GM10248 (cell line): ENCODE measurements at regions of chr17 and their contacts with region 1.

Region 1: GRCh38 chr17:69388822-69389442 is 25.6 kb upstream of the MAP2K6 start:
- DNase-seq: no peak
- CTCF ChIP-seq: no peak

Region 2: GRCh38 chr17:69223809-69224208 is 165.1 kb before region 1 on chr17:
- CTCF ChIA-PET with region 1: no interaction called
- POLR2A ChIA-PET with region 1: no interaction called
- DNase-seq: peak; percentile 17
- CTCF ChIP-seq: no peak

Region 3: GRCh38 chr17:69335058-69335457 is 53.9 kb before region 1 on chr17:
- CTCF ChIA-PET with region 1: interaction called, 21 read pairs
- POLR2A ChIA-PET with region 1: no interaction called
- DNase-seq: no peak
- CTCF ChIP-seq: peak; percentile 24

Region 4: GRCh38 chr17:69358688-69359596 is 30.0 kb before region 1 on chr17:
- CTCF ChIA-PET with region 1: interaction called, 16 read pairs
- POLR2A ChIA-PET with region 1: no interaction called
- DNase-seq: no peak
- CTCF ChIP-seq: peak; percentile 32

Region 5: DNA sequence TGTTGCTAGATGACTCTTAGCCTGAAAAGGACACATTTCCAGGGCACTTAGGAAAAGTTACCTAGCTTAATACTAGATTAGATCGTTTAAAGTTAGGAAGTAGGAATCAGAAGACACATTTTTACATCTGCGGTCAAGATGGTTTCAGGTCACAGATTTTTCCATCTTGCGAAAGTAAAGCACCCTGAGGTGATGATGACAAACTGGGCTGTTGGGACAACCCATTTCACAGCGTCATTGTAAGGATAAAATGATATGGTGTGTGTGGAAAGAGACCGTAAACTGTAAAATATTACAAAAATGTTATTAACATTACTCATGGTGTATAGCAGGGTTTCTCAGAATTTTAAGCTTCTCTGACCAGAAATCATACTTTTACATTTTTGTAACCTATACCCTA is 15.4 kb after region 1 on chr17:
- CTCF ChIA-PET with region 1: interaction called, 25 read pairs
- POLR2A ChIA-PET with region 1: no interaction called
- DNase-seq: no peak
- CTCF ChIP-seq: no peak

Region 6: GRCh38 chr17:69506489-69506888 is 117.6 kb after region 1 on chr17:
- CTCF ChIA-PET with region 1: no interaction called
- POLR2A ChIA-PET with region 1: no interaction called
- DNase-seq: no peak
- CTCF ChIP-seq: peak; percentile 5